ENCODE measurements at regions of chr7 and their contacts with region 1.

Region 1: DNA sequence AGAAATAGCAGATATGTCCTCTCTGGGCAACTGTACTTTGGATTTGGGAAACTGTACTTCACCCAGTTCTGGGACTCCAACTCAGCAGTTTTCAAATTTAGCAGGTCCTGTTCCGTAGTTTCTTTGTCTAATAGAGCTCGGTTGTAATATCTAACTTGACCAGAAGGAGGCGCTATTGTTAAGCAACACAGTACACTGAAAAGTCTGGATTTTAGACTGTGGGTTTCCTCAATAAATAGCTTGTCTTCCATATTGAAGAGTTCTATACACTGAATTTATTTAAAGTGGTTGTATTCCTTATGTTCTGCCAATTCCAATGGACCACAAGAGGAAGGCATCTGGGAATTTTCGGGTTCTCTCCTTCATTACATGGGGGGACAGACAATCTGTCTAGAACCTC is 39.8 kb downstream of the ELFN1 start:
- DNase-seq: peak in 3 of 4 experiments; percentile 33 to 39 (median 38)
- ATAC-seq: no peak
- H3K4me3 ChIP-seq: no peak overlapping the region
- H3K27ac ChIP-seq: no peak overlapping the region
- H3K4me1 ChIP-seq: peaks cover 4 to 27% of the 10 kb centered on the region in 2 experiments; a peak in 2 of 5 replicates
- H3K27me3 ChIP-seq: peaks cover 7 to 34% of the 10 kb centered on the region in 2 experiments; a peak in 4 of 5 replicates
- CTCF ChIP-seq: peak; percentile 38 to 61 (median 44); a peak in 5 of 6 replicates
- EP300 ChIP-seq: no peak
- POLR2A ChIP-seq: no peak
- RAD21 ChIP-seq: peak in 1 of 2 experiments; percentile 37; a peak in 2 of 4 replicates

Region 2: DNA sequence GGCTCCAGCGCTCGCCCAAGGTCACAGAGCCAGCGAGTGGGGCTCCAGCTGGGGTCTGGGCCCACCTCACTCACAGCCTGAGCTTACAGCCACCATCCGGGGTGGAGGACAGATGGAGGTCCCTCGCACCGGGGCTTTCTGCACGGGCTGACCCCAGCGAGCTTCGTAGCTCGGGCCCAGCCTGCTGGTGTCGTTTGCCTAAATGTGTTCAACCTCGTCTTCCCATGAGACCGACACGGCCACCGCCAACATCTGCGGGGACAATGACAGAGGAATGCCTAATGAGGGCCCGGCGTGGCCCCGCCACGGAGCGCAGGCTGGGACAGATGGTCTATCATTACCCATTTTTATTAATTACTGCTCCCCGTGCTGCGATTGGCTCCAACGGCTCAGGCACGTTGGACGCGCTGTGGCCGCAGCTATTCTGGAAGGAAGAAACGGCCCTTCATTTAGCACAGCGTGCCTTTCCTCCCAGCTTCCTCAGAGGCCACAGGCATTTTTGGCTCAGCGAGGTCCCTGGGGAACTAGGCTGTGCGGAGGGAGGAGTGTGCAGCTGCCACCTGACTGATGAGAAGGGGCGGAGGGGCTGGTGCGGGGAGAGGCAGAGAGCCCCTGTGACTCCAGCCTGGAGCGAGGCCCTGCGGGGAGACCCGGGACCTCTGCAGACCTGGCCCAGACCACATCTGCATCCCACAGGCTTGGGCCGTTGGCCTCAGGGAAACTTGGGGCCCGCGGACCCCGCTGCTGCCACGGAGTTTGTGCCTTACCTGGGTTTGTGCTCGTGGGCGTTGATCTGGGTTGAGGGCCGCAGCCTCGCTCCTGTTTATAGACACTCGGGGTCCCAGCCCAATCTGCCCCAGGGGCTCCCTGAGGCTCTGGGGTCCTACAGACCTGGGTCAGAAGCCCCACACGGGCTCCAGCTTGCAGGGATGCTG is 62.7 kb before region 1 on chr7:
- CTCF ChIA-PET with region 1: no interaction called
- POLR2A ChIA-PET with region 1: no interaction called
- in situ Hi-C with region 1: no loop called
- intact Hi-C with region 1: loop called (anchors 10 kb)
- DNase-seq: no peak
- ATAC-seq: no peak
- H3K4me3 ChIP-seq: no peak overlapping the region
- H3K27ac ChIP-seq: no peak overlapping the region
- H3K4me1 ChIP-seq: peaks cover 21 to 61% of the 10 kb centered on the region in 2 experiments; a peak in 4 of 5 replicates
- H3K27me3 ChIP-seq: peaks cover 0 to 26% of the 10 kb centered on the region in 2 experiments; a peak in 2 of 5 replicates
- CTCF ChIP-seq: no peak
- EP300 ChIP-seq: no peak
- POLR2A ChIP-seq: no peak
- RAD21 ChIP-seq: no peak

Region 3: GRCh38 chr7:1669954-1670893 is 39.7 kb before region 1 on chr7 and contains the start of gene ELFN1:
- CTCF ChIA-PET with region 1: no interaction called
- POLR2A ChIA-PET with region 1: no interaction called
- in situ Hi-C with region 1: no loop called
- intact Hi-C with region 1: no loop called
- DNase-seq: peak; percentile 57 to 65 (median 60)
- ATAC-seq: peak; percentile 22; the same call in 1 of the 3 replicates
- H3K4me3 ChIP-seq: no peak within 1 kb of the TSS
- H3K27ac ChIP-seq: no peak within 1 kb of the TSS
- H3K4me1 ChIP-seq: peaks cover 0 to 59% of the 10 kb centered on the region in 2 experiments; a peak in 2 of 5 replicates
- H3K27me3 ChIP-seq: peaks cover 13 to 43% of the 10 kb centered on the region in 2 experiments; a peak in 4 of 5 replicates
- CTCF ChIP-seq: no peak
- EP300 ChIP-seq: no peak
- POLR2A ChIP-seq: no peak
- RAD21 ChIP-seq: no peak
- polyA plus RNA-seq, gene ELFN1: not detected

Measured in K562 (cell line).